GM12878 (cell line): ENCODE measurements at regions of chr22 and their contacts with region 1.

Region 1: DNA sequence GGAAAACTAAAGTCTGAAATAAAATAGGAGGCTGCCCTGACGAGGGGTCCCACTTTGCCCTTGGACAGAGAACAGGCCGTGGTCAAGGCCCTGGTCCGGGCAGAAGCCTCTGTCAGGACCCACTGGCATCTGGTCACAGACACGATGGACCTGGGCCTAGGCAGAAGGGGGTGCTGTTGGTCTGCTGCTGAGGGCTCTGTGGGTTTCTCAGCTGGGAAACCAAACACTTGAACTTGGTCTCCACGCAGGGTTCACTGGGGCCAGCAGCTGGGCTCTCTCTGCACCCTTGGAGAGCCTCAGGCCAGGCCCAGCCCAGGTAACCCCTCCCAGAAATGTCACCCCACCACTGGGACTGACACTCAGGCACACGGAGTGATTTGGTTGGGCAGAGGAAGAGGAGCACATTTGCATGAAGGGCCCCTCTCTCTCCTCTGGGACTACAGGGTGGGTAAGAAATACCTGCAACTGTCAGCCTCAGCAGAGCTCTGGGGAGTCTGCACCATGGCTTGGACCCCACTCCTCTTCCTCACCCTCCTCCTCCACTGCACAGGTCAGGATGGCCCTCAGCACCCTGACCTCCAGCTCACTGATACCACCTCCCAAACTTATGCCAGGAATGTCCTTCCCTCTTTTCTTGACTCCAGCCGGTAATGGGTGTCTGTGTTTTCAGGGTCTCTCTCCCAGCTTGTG is 48.1 kb upstream of the TOP3B start:
- DNase-seq: peak; percentile 84
- ATAC-seq: peak; percentile 82
- H3K4me3 ChIP-seq: peak overlapping the region; percentile 66
- H3K27ac ChIP-seq: peak overlapping the region; percentile 80
- H3K4me1 ChIP-seq: peaks cover 38% of the 10 kb centered on the region
- H3K27me3 ChIP-seq: no peaks in the 10 kb centered on the region
- CTCF ChIP-seq: peak; percentile 85 to 93 (median 88)
- EP300 ChIP-seq: no peak; a peak in 1 of 4 replicates
- POLR2A ChIP-seq: peak; percentile 92
- RAD21 ChIP-seq: peak; percentile 84

Region 2: GRCh38 chr22:21807544-21808529 is 222.8 kb before region 1 on chr22:
- CTCF ChIA-PET with region 1: no interaction called
- POLR2A ChIA-PET with region 1: no interaction called
- RAD21 ChIA-PET with region 1: no interaction called
- SMC1A ChIA-PET with region 1: no interaction called
- in situ Hi-C with region 1: no loop called
- intact Hi-C with region 1: no loop called
- DNase-seq: no peak
- ATAC-seq: no peak
- H3K4me3 ChIP-seq: no peak overlapping the region
- H3K27ac ChIP-seq: no peak overlapping the region
- H3K4me1 ChIP-seq: peaks cover 4% of the 10 kb centered on the region
- H3K27me3 ChIP-seq: no peaks in the 10 kb centered on the region
- CTCF ChIP-seq: no peak
- EP300 ChIP-seq: no peak
- POLR2A ChIP-seq: no peak
- RAD21 ChIP-seq: no peak

Region 3: DNA sequence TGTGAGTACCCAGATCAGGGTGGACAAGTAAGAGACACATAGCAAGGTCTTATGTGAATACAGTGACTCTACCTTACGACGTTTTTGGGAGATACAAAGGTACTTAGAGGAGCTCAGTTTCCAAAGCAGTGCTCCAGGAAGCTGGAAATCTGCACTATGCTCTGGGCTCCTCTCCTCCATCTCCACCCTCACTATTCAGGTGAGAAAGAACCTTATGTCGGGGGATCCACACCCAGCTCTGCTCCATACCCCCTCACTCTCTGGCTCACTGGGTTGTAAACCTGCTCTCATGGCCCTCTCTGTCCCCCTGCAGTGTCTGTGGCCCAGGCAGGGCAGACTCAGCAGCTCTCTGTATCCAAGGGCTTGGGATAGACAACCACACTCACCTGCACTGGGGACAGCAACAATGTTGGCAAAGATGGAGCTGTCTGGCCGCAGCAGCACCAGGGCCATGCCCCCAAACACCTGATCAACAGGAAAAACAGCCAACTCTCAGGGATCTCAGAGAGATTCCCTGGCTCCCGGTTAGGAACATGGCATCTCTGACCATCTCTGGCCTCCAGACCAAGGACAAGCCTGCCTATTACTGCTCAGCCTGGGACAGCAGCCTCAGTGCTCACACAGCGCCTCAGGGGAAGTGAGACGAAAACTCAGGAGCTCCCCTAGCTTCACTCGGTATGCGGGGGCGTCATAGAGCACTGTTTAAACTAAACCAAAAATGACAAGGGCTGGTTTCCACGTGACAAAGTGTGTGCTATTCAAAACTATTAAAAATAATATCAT is 12.8 kb after region 1 on chr22:
- CTCF ChIA-PET with region 1: interaction called, 156 read pairs
- POLR2A ChIA-PET with region 1: interaction called, 141 read pairs
- RAD21 ChIA-PET with region 1: interaction called, 229 read pairs
- SMC1A ChIA-PET with region 1: interaction called, 174 read pairs
- in situ Hi-C with region 1: no loop called
- intact Hi-C with region 1: no loop called
- DNase-seq: no peak
- ATAC-seq: peak; percentile 85
- H3K4me3 ChIP-seq: peak overlapping the region; percentile 44; the same call in 1 of the 2 replicates
- H3K27ac ChIP-seq: peak overlapping the region; percentile 58
- H3K4me1 ChIP-seq: peaks cover 15% of the 10 kb centered on the region
- H3K27me3 ChIP-seq: no peaks in the 10 kb centered on the region
- CTCF ChIP-seq: peak in 2 of 3 experiments; percentile 2 to 20; a peak in 1 of 6 replicates
- EP300 ChIP-seq: no peak
- POLR2A ChIP-seq: peak; percentile 56
- RAD21 ChIP-seq: no peak

Region 4: GRCh38 chr22:22085702-22086500 is 55.3 kb after region 1 on chr22:
- CTCF ChIA-PET with region 1: no interaction called
- POLR2A ChIA-PET with region 1: no interaction called
- RAD21 ChIA-PET with region 1: no interaction called
- SMC1A ChIA-PET with region 1: no interaction called
- in situ Hi-C with region 1: no loop called
- intact Hi-C with region 1: no loop called
- DNase-seq: no peak
- ATAC-seq: no peak
- H3K4me3 ChIP-seq: no peak overlapping the region
- H3K27ac ChIP-seq: no peak overlapping the region
- H3K4me1 ChIP-seq: no peaks in the 10 kb centered on the region
- H3K27me3 ChIP-seq: no peaks in the 10 kb centered on the region
- CTCF ChIP-seq: no peak
- EP300 ChIP-seq: no peak
- POLR2A ChIP-seq: no peak
- RAD21 ChIP-seq: no peak

Region 5: GRCh38 chr22:22103078-22103875 is 72.6 kb after region 1 on chr22:
- CTCF ChIA-PET with region 1: interaction called, 67 read pairs
- POLR2A ChIA-PET with region 1: interaction called, 15 read pairs
- RAD21 ChIA-PET with region 1: interaction called, 51 read pairs
- SMC1A ChIA-PET with region 1: interaction called, 41 read pairs
- in situ Hi-C with region 1: no loop called
- intact Hi-C with region 1: loop called (anchors 1 kb)
- DNase-seq: no peak
- ATAC-seq: 0 out of 3 replicates have a peak, but pooled peaks have one; percentile 18
- H3K4me3 ChIP-seq: no peak overlapping the region
- H3K27ac ChIP-seq: no peak overlapping the region
- H3K4me1 ChIP-seq: peaks cover 9% of the 10 kb centered on the region
- H3K27me3 ChIP-seq: no peaks in the 10 kb centered on the region
- CTCF ChIP-seq: peak; percentile 17 to 60 (median 30); a peak in 5 of 6 replicates
- EP300 ChIP-seq: no peak
- POLR2A ChIP-seq: no peak
- RAD21 ChIP-seq: no peak

Region 6: DNA sequence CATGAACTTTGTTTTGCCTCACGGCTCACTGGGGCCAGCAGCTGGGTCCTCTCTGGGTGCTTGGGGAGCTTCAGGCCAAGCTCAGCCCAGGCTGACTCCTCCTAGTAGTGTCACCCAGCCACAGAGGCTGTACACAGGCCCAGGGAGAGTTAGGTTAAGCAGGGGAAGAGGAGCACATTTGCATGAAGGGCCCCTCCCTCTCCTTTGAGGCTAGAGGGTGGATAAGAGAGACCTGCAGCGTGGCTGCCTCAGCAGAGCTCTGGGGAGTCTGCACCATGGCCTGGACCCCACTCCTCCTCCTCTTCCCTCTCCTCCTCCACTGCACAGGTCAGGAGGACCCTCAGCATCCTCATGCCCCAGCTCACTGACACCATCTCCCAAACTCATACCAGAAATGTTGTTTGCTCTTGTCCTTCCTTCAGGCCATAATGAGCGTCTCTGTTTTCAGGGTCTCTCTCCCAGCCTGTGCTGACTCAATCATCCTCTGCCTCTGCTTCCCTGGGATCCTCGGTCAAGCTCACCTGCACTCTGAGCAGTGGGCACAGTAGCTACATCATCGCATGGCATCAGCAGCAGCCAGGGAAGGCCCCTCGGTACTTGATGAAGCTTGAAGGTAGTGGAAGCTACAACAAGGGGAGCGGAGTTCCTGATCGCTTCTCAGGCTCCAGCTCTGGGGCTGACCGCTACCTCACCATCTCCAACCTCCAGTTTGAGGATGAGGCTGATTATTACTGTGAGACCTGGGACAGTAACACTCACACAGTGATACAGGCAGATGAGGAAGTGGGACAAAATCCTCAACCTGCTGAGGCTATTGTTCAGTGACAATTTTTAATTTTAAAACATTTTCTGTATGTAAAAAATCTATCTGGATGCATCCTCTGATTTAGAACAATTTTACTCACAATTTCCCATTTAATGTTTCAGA is 131.6 kb after region 1 on chr22:
- CTCF ChIA-PET with region 1: interaction called, 30 read pairs
- POLR2A ChIA-PET with region 1: interaction called, 6 read pairs
- RAD21 ChIA-PET with region 1: interaction called, 22 read pairs
- SMC1A ChIA-PET with region 1: interaction called, 15 read pairs
- in situ Hi-C with region 1: loop called (anchors 10 kb)
- intact Hi-C with region 1: no loop called
- DNase-seq: peak; percentile 42
- ATAC-seq: peak; percentile 92
- H3K4me3 ChIP-seq: peak overlapping the region; percentile 30; the same call in 1 of the 2 replicates
- H3K27ac ChIP-seq: no peak overlapping the region; the same call in 1 of the 2 replicates
- H3K4me1 ChIP-seq: peaks cover 19% of the 10 kb centered on the region
- H3K27me3 ChIP-seq: no peaks in the 10 kb centered on the region
- CTCF ChIP-seq: no peak
- EP300 ChIP-seq: no peak
- POLR2A ChIP-seq: peak; percentile 86
- RAD21 ChIP-seq: no peak

Region 7: GRCh38 chr22:22201185-22201929 is 170.7 kb after region 1 on chr22:
- CTCF ChIA-PET with region 1: interaction called, 29 read pairs
- POLR2A ChIA-PET with region 1: interaction called, 7 read pairs
- RAD21 ChIA-PET with region 1: interaction called, 20 read pairs
- SMC1A ChIA-PET with region 1: interaction called, 19 read pairs
- in situ Hi-C with region 1: no loop called
- intact Hi-C with region 1: no loop called
- DNase-seq: no peak
- ATAC-seq: peak; percentile 70
- H3K4me3 ChIP-seq: no peak overlapping the region
- H3K27ac ChIP-seq: no peak overlapping the region
- H3K4me1 ChIP-seq: peaks cover 14% of the 10 kb centered on the region
- H3K27me3 ChIP-seq: no peaks in the 10 kb centered on the region
- CTCF ChIP-seq: peak in 2 of 3 experiments; percentile 39 to 58
- EP300 ChIP-seq: no peak
- POLR2A ChIP-seq: no peak
- RAD21 ChIP-seq: peak; percentile 40